ENCODE measurements at regions of chr14 and their contacts with region 1.

Region 1: DNA sequence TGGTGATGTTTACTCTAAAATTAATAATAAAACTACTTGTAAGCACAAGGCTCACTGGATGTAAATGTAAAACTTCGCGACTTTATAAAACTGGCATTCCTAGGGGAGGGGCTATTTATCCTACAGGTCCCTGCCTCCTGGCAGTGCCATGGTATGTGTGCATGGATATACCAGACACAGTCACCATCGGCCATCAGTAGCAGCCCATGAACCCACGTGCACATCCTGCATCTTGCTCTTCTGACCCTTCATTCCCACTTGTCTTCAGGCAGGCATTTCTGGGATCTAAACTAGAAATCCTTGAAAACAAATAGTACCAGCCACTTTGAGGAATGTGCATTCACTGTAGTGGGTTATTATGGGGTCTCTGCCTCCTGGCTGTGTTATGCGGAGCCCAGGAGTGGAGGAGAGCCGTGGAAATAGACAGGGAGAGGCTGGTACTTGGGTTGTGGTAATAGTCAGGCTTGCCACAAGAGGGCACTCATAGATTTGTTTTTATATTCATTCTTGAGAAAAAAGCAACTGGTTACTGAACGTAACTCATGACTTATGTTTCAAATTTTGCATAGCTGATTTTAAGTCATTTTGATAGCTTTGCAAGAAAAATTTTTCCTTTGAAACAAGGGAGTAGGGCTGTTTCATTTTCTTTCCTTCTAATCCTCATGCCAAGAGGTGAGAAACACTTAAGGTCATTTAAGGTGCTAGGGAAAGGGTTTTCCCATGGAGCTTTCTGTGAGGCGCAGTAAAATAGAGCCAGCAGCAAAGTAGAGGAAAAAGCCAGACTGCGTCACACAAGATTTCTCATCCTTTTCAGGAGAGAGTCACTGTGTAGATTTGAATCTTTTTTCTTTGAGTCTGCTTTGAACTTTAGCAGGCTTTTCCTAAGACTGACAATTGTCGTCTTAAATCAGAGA is 17.4 kb upstream of the GALNT16 start:
- DNase-seq: no peak
- ATAC-seq: peak; percentile 67
- H3K4me3 Mint-ChIP-seq: no peak overlapping the region
- H3K27ac Mint-ChIP-seq: no peak overlapping the region
- H3K4me1 Mint-ChIP-seq: no peaks in the 10 kb centered on the region
- H3K27me3 Mint-ChIP-seq: peaks cover 4% of the 10 kb centered on the region
- CTCF ChIP-seq: no peak

Region 2: DNA sequence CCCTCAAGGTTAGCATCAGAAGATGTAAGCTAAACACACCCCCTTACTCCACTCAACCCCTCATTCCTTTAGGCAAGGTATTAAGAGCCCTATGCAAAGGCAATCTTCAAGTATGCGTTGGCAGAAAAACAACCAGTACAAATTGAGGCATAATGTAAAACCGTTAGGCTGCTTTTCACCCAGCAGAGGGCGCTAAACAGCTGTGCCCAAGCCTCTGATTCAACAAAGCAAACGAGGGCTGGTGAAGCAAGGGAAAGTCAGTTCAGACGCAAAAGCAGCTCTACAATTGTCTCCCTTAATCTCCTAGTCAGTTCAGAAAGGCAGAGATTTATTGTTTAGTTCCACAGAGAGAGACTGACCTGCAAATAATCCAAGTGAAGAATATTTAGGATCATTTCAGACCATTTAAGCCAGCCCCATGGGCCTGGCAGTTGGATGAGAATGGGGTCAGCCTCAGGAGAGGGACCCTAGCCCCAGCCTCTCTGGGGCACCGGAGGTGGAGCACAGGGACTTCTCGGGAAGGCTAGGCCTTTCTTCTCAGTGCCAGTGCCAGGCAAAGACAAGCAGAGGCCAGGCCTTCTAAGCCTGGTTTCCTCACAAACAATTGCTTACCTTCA is 113.2 kb before region 1 on chr14:
- CTCF ChIA-PET with region 1: interaction called, 5 read pairs
- POLR2A ChIA-PET with region 1: no interaction called
- intact Hi-C with region 1: loop called (anchors 1 kb)
- DNase-seq: peak; percentile 24
- ATAC-seq: peak; percentile 76
- H3K4me3 Mint-ChIP-seq: no peak overlapping the region
- H3K27ac Mint-ChIP-seq: peak overlapping the region; percentile 54
- H3K4me1 Mint-ChIP-seq: peaks cover 35% of the 10 kb centered on the region
- H3K27me3 Mint-ChIP-seq: no peaks in the 10 kb centered on the region
- CTCF ChIP-seq: peak; percentile 92

Region 3: GRCh38 chr14:69204753-69205152 is 37.8 kb before region 1 on chr14:
- CTCF ChIA-PET with region 1: no interaction called
- POLR2A ChIA-PET with region 1: no interaction called
- intact Hi-C with region 1: no loop called
- DNase-seq: no peak
- ATAC-seq: no peak
- H3K4me3 Mint-ChIP-seq: no peak overlapping the region
- H3K27ac Mint-ChIP-seq: no peak overlapping the region
- H3K4me1 Mint-ChIP-seq: no peaks in the 10 kb centered on the region
- H3K27me3 Mint-ChIP-seq: no peaks in the 10 kb centered on the region
- CTCF ChIP-seq: no peak

Region 4: GRCh38 chr14:69363055-69363454 is 120.5 kb after region 1 on chr14:
- CTCF ChIA-PET with region 1: interaction called, 8 read pairs
- POLR2A ChIA-PET with region 1: no interaction called
- intact Hi-C with region 1: loop called (anchors 1 kb)
- DNase-seq: no peak
- ATAC-seq: no peak
- H3K4me3 Mint-ChIP-seq: no peak overlapping the region
- H3K27ac Mint-ChIP-seq: no peak overlapping the region
- H3K4me1 Mint-ChIP-seq: peaks cover 24% of the 10 kb centered on the region
- H3K27me3 Mint-ChIP-seq: no peaks in the 10 kb centered on the region
- CTCF ChIP-seq: no peak